ENCODE measurements at regions of chr11 and their contacts with region 1.

Region 1: GRCh38 chr11:10293423-10294289 is at the start of gene SBF2:
- DNase-seq: peak; percentile 87 to 95 (median 89)
- ATAC-seq: peak; percentile 90 to 96 (median 92)
- H3K4me3 ChIP-seq: peak within 1 kb of the TSS; percentile 74 to 98 (median 96)
- H3K27ac ChIP-seq: peak within 1 kb of the TSS; percentile 90 to 99 (median 97)
- H3K4me1 ChIP-seq: peaks cover 0 to 62% (median 16%) of the 10 kb centered on the region in 12 donors
- H3K27me3 ChIP-seq: no peaks in the 10 kb centered on the region
- CTCF ChIP-seq: no peak
- POLR2A ChIP-seq: peak in 1 of 2 donors; percentile 62
- total RNA-seq, gene SBF2: 15.3 to 33.9 (median 21.5) TPM

Region 2: DNA sequence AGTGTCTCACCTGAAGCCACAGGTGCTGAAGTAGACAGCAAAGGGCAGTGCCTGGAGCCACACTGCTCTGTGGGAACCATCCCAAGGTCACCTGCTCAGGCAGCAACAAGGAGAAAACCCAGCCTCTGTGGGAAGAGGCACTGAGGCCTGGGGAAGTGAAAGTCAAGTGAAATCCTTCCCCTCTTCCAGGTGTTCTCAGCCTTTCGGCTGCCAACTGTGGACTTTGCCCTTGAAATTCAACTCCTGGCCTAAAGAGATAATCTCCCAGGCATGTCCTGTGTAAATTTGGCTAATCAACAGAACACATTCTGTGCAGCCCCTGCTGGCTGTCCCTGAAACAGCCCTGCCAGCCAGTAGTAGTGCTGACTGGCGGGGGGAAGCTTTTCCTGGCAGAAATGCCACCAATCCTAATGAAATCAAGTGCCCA is 1499.0 kb before region 1 on chr11:
- intact Hi-C with region 1: no loop called
- DNase-seq: peak in 1 of 5 donors; percentile 39
- ATAC-seq: peak; percentile 79 to 87 (median 86)
- H3K4me3 ChIP-seq: no peak overlapping the region
- H3K27ac ChIP-seq: peak overlapping the region in 11 of 12 donors; percentile 31 to 89 (median 75)
- H3K4me1 ChIP-seq: peaks cover 0 to 51% (median 30%) of the 10 kb centered on the region in 12 donors
- H3K27me3 ChIP-seq: no peaks in the 10 kb centered on the region
- CTCF ChIP-seq: peak; percentile 24 to 60 (median 44)
- POLR2A ChIP-seq: no peak

Region 3: DNA sequence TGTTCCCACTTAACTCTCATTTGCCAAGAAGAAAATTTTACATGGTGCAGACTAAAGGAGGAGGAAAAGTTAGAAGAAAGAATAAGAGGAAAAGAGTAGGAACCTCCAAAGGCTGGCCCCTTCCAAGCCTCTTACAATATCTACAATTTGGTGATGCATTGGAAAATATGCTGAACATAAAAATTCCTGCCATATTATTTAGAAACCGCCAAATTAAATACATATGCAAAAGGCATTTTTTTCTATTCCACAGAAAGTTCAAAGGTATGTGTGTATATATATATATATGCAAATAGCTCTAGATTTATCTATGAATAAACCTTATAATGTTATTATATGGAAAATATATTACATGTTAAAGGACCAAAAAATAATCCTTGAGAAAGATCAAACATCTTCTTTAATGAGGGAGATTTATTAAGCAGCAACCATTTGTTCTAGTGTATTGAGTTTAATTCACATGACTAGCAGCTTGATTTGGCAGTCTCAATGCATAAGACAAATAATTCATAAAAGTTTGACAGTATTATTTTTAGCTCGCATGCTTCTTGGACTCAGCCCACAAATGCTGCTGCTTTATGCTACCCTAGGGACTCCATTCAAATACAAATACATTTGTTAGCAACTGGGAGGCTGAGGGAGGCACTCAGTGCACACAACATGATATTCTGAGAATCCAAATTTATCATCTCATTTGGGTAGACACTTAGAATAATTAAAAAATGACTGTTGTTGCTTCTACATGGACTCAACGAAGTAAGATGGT is 184.6 kb before region 1 on chr11:
- intact Hi-C with region 1: loop called in 1 of 10 experiments (anchors 10 kb)
- DNase-seq: peak in 3 of 5 donors; percentile 22 to 42 (median 31)
- ATAC-seq: peak; percentile 62 to 88 (median 73)
- H3K4me3 ChIP-seq: no peak overlapping the region
- H3K27ac ChIP-seq: peak overlapping the region in 8 of 12 donors; percentile 19 to 58 (median 52)
- H3K4me1 ChIP-seq: peaks cover 0 to 41% (median 19%) of the 10 kb centered on the region in 12 donors
- H3K27me3 ChIP-seq: no peaks in the 10 kb centered on the region
- CTCF ChIP-seq: no peak
- POLR2A ChIP-seq: no peak

Measured in heart left ventricle (tissue), 16 donors.